ENCODE measurements at regions of chr16 and their contacts with region 1.

Region 1: DNA sequence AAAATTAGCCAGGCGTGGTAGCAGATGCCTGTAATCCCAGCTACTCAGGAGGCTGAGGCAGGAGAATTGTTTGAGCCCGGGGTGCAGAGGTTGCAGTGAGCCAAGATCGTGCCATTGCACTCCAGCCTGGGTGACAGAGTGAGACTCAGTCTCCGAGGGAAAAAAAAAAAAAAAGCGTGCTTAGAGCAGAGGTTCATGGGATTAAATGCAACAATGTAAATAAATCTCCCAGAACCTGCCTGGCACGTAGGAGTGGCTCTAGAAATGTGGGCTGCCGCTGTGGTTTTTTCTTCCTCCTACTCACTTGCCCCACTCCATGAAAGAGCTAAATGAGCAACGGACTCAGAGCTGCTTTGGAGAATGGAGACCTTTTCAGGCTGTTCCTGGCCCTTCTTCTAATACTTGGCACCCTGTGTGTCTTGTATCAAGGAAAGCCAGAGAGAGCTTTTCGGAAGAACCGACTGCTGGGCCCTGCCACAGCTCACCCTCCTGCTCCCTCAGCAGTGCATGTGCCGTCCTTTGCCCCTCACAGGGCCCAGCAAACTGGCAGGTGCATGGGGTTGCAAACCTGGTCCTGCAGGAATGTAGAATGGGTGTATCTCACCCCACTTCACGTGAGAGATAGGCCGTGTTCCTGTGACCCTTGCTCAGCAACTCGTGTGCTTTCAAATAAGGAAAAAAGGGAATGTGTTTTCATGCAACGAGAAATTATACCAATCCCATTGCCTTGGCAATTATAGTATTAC is 52.0 kb downstream of the LDHD start:
- DNase-seq: peak; percentile 66
- H3K4me3 Mint-ChIP-seq: peak overlapping the region; percentile 45
- H3K27ac Mint-ChIP-seq: peak overlapping the region; percentile 36
- H3K4me1 Mint-ChIP-seq: peaks cover 25% of the 10 kb centered on the region
- H3K27me3 Mint-ChIP-seq: no peaks in the 10 kb centered on the region
- CTCF ChIP-seq: no peak

Region 2: GRCh38 chr16:74998481-74999218 is 65.9 kb before region 1 on chr16 and contains the start of gene ZNRF1:
- CTCF ChIA-PET with region 1: interaction called, 5 read pairs
- intact Hi-C with region 1: loop called (anchors 2 kb)
- DNase-seq: peak; percentile 88
- H3K4me3 Mint-ChIP-seq: peak within 1 kb of the TSS; percentile 72
- H3K27ac Mint-ChIP-seq: peak within 1 kb of the TSS; percentile 63
- H3K4me1 Mint-ChIP-seq: peaks cover 46% of the 10 kb centered on the region
- H3K27me3 Mint-ChIP-seq: peaks cover 9% of the 10 kb centered on the region
- CTCF ChIP-seq: peak; percentile 92
- total RNA-seq, gene ZNRF1: 27.1 and 27.5 TPM in 2 replicates

Region 3: DNA sequence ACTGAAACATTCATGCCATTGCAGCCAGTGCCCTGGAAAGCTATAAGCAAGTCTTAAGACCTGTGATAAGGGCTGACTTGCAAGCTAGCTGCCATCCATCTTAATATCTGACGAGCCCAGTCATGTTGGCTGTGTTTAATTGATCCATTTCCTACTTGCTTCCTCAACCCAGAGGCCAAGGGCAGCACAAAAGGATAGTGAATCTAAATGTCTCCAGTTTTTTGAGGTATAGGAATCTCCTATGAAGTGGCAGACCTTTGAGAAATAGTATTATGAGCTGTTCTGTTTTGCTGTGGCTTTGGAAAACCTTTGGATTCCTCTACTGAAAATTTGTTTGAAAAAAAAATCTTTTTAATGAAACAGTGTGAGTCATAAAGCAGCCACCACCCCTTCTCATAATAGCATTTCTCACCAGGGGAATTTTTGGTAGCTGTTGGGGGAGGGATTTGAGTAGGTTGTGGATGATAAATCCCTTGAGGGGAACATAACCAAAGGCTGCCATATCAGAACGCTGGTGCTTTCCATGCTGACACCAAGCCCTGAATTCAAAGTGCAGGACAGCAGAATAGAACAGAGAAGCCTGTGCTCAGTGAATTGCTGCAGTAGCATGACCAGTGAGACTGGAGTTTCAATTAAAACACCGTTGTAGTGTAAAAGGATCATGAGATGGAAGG is 52.8 kb before region 1 on chr16:
- CTCF ChIA-PET with region 1: no interaction called
- intact Hi-C with region 1: no loop called
- DNase-seq: peak; percentile 51
- H3K4me3 Mint-ChIP-seq: peak overlapping the region; percentile 34
- H3K27ac Mint-ChIP-seq: peak overlapping the region; percentile 33
- H3K4me1 Mint-ChIP-seq: peaks cover 24% of the 10 kb centered on the region
- H3K27me3 Mint-ChIP-seq: no peaks in the 10 kb centered on the region
- CTCF ChIP-seq: no peak

Region 4: DNA sequence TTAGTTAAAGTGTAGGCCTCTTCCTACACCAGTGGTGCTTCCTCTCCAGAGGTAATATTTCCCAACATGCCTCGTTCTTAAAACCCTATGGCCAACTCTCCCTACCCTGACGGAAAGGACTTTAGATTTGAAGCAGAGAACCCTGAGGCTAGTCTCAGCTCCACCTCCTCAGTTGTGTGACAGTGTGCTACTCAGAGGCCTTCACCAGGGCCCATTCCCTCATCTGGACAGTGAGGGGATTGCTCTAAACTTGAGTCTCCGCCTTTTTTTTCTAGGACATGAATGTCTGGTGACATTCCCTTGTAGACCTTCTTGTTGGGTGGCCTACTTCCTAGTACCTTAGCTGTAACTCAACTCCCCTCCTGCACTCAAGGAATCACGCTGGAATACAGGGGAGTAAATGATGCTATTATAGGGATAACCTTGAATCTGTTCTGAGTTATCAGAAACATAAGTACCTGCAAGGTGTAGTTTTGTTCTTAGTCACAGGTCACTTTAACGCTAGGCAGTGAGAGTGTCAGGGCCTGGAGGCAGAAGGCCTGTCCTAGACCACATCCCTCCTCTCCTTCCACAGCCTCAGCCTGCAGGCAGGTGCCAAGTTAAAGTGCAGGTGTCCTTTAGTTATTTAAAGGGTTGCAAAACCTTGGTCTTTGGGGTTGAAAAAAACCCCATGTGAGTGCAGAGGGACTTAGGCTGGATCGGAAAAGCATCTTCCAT is 25.1 kb after region 1 on chr16:
- CTCF ChIA-PET with region 1: no interaction called
- intact Hi-C with region 1: loop called (anchors 2 kb)
- DNase-seq: no peak
- H3K4me3 Mint-ChIP-seq: no peak overlapping the region
- H3K27ac Mint-ChIP-seq: no peak overlapping the region
- H3K4me1 Mint-ChIP-seq: peaks cover 24% of the 10 kb centered on the region
- H3K27me3 Mint-ChIP-seq: no peaks in the 10 kb centered on the region
- CTCF ChIP-seq: no peak

Region 5: DNA sequence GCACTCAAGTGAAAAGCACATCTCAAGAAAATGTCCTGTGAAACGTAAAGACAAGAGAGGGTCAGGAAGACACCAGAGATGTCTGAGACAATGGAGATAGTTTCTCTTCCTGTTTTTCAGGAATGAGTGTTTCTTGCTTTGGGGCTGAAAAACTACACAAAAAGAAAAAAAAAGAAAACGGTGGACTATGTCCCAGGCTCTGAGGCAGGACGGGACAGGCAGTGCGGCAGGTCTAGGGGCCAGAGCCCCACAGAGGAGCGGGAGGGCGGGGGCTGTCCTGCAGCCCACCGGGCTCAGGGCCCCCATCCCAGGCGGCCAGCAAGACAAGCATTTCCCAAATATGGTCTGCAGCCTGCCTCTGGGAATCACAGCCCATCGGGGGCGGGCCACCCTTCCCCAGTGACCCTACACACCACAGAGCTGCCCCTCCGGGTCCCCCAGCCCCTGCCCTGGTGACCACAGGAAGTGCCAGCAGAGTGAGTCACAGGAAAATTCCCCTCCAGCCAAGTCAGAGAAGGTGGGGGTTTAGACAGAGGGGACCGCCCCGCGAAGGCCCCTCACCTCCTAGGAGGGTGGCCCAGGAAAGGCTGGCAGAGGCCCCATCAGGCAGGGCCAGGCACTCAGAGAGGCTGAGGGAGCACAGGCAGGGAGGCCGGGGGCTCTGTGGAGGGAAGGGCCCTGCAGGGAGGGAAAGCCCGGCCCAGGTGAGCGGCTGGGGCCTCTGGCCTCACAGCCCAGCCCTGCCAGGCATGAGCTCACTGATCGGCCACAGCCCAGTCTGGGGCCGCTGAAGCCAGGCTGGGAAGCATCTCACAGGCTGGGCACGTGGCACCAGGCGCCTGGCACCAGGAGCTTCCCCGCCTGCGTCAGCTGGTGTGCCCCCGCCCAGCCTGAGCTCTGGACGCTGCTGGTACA is 180.5 kb after region 1 on chr16:
- CTCF ChIA-PET with region 1: no interaction called
- intact Hi-C with region 1: no loop called
- DNase-seq: peak; percentile 96
- H3K4me3 Mint-ChIP-seq: peak overlapping the region; percentile 96
- H3K27ac Mint-ChIP-seq: peak overlapping the region; percentile 93
- H3K4me1 Mint-ChIP-seq: peaks cover 88% of the 10 kb centered on the region
- H3K27me3 Mint-ChIP-seq: no peaks in the 10 kb centered on the region
- CTCF ChIP-seq: no peak

Measured in Calu3 (cell line).